A549 (cell line): ENCODE measurements at regions of chr10 and their contacts with region 1.

Region 1: DNA sequence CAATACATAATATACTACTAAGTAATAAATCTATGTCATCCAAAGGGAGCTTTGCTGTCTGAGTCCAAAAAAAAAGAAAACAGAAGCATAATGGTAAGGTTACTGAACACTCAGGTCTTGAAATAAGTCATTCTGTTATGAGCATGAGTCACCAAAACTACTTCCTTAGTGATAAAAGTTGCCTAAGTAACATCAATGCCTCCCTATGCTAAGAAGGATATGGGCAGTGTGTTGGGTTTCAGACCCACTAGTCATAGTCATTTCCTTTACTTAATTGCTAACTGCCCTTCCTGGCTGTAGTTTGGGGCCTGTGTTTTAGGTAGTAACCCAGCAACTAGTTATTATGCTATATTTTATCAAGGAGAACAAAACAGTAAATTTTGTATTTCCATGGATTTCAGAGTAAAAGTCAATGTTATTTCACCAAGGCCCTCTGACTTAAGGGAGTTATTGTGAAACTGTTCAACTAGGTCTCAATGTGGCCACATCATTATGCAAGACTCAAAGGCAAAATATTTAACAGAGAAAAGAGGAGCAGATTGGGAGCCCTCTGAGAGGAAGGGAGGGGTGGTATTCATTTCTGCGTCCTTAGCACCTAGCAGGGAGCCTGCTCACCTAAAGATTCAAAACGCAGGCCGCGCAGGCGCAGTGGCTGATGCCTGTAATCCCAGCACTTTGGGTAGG is 11.7 kb upstream of the VIM start:
- DNase-seq: peak; percentile 83 to 88
- ATAC-seq: peak; percentile 91 to 93
- H3K4me3 ChIP-seq: no peak overlapping the region
- H3K27ac ChIP-seq: peak overlapping the region; percentile 58 to 86; a peak in 5 of 6 replicates
- H3K4me1 ChIP-seq: peaks cover 55% of the 10 kb centered on the region
- CTCF ChIP-seq: no peak
- EP300 ChIP-seq: no peak
- POLR2A ChIP-seq: no peak
- RAD21 ChIP-seq: no peak

Region 2: DNA sequence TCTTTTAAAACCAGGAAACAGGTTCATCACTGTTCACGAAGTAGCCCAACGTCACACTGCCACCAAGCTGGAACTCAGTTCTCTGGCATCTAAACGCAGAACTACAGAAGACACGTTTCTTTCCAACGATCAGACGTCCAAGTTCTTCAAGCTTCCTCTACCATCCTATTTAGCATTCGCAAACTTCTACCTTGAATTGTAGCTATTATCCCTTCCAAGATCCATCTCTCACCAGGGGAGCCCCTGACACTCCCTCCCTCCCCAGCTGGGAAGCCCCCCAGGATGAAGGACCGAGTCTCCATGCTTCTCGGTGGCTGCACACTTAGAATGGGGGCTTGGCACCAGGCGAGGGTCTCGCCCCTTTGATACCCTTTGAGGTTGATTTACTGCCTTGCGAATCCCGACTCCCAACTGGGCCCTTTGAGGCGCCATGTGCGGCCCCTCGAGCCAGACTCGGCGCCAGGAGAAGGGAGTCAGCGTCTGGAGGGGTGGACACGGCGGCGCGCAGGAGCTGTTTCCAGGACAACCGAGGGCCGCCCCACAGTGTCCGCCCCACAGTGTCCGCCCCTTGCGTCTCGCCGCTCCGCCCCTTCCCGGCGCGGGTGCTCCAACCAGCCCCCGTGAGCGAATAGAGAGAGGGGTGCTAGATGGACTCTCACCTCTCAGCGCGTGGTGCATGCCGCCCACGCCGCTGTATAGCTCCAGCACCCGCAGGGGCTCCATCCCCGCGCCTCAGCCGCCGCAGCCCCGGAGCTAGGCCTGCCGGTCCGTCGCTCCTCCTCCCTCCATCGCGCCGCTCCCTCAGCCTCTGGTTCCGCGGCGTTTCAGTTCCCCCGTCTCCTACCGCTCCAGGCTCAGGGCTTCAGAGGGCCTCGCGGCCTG is 15.2 kb before region 1 on chr10 and contains the start of gene TRDMT1:
- CTCF ChIA-PET with region 1: interaction called, 4 read pairs
- POLR2A ChIA-PET with region 1: interaction called, 14 read pairs
- DNase-seq: peak; percentile 76 to 92
- ATAC-seq: peak; percentile 99 to 100
- H3K4me3 ChIP-seq: peak within 1 kb of the TSS; percentile 65
- H3K27ac ChIP-seq: peak within 1 kb of the TSS; percentile 88 to 96
- H3K4me1 ChIP-seq: peaks cover 15% of the 10 kb centered on the region
- CTCF ChIP-seq: no peak; the same call in 2 of the 3 replicates
- EP300 ChIP-seq: peak in 1 of 2 experiments; percentile 16; a peak in 1 of 5 replicates
- POLR2A ChIP-seq: peak; percentile 51
- RAD21 ChIP-seq: peak; percentile 34 to 39
- polyA plus RNA-seq, gene TRDMT1: 5.7 and 7.4 TPM in 2 replicates

Region 3: DNA sequence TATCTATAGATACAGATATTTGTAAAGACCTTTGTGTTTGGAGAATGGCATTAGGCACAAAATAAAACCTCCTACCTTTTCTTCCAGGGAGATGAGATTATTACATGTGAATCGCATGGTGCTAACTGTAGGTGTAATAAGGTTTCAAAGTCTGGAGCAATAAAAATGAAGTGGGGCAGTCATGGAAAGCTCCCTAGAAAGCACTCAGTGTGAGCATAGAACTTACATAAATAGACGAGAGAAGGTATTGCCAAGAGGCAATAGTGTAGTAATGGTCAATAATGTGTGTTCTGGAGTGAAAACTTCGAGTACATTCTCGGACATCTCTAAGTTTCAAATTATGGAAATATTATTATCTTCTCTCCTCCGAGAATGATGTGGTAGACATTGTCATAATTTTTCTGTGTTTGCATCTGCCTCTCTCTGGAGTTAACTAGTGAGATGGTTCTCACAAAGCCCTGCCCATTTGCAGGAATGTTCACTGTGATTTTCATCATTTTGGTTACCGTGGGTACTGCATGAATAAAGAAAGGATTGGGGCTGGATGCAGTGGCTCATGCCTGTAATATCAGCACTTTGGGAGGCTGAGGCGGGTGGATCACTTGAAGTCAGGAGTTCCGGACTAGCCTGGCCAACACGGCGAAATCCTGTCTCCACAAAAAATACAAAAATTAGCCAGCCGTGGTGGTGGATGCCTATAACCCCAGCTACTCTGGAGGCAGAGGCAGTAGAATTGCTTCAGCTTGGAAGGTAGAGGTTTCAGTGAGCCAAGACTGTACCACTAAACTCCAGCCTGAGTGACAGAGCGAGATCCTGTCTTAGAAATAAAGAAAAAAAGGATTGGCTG is 22.3 kb after region 1 on chr10:
- CTCF ChIA-PET with region 1: no interaction called
- POLR2A ChIA-PET with region 1: no interaction called
- DNase-seq: peak in 1 of 2 experiments; percentile 44
- ATAC-seq: peak; percentile 72 to 80
- H3K4me3 ChIP-seq: no peak overlapping the region
- H3K27ac ChIP-seq: no peak overlapping the region; a peak in 1 of 6 replicates
- H3K4me1 ChIP-seq: peaks cover 12% of the 10 kb centered on the region; the same call in 2 of the 3 replicates
- CTCF ChIP-seq: no peak
- EP300 ChIP-seq: no peak
- POLR2A ChIP-seq: no peak
- RAD21 ChIP-seq: no peak